Activated CD4-positive, alpha-beta memory T cell treated with anti-CD3 and anti-CD28 coated beads, Interleukin-2, amount 10 ng/mL, durations not matched to agents 7 days and 5 days (primary cell): ENCODE measurements at regions of chr12 and their contacts with region 1.

Region 1: DNA sequence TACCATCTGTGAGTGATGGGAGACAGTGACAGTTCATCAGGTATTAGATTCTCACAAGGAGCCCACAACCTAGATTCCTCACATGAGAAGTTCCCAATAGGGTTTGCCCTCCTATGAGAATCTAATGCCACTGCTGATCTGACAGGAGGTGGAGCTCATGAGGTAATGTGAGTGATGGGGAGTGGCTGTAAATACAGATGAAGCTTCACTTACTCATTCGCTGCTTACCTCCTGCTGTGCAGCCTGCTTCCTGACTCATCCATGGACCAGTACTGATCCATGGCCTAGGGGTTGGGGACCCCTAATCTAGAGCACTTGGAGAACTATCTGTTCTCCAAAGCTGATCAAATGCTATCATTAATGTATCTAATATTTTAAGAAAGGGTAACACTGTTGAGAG is 17.7 kb downstream of the CLEC2D start:
- DNase-seq: no peak
- H3K4me3 Mint-ChIP-seq: no peak overlapping the region
- H3K27ac Mint-ChIP-seq: peak overlapping the region; percentile 10
- H3K4me1 Mint-ChIP-seq: peaks cover 77% of the 10 kb centered on the region
- H3K27me3 Mint-ChIP-seq: no peaks in the 10 kb centered on the region

Region 2: GRCh38 chr12:9702255-9702654 is 15.0 kb after region 1 on chr12:
- CTCF ChIA-PET with region 1: interaction called, 12 read pairs
- POLR2A ChIA-PET with region 1: interaction called, 13 read pairs
- DNase-seq: peak; percentile 75
- H3K4me3 Mint-ChIP-seq: peak overlapping the region; percentile 43
- H3K27ac Mint-ChIP-seq: peak overlapping the region; percentile 85
- H3K4me1 Mint-ChIP-seq: peaks cover 72% of the 10 kb centered on the region
- H3K27me3 Mint-ChIP-seq: no peaks in the 10 kb centered on the region

Region 3: GRCh38 chr12:9707864-9708808 is 20.9 kb after region 1 on chr12:
- CTCF ChIA-PET with region 1: interaction called, 12 read pairs
- POLR2A ChIA-PET with region 1: interaction called, 13 read pairs
- DNase-seq: peak; percentile 74
- H3K4me3 Mint-ChIP-seq: peak overlapping the region; percentile 7
- H3K27ac Mint-ChIP-seq: peak overlapping the region; percentile 70
- H3K4me1 Mint-ChIP-seq: peaks cover 40% of the 10 kb centered on the region
- H3K27me3 Mint-ChIP-seq: no peaks in the 10 kb centered on the region